B cell (primary cell): ENCODE measurements at regions of chr3 and their contacts with region 1.

Region 1: DNA sequence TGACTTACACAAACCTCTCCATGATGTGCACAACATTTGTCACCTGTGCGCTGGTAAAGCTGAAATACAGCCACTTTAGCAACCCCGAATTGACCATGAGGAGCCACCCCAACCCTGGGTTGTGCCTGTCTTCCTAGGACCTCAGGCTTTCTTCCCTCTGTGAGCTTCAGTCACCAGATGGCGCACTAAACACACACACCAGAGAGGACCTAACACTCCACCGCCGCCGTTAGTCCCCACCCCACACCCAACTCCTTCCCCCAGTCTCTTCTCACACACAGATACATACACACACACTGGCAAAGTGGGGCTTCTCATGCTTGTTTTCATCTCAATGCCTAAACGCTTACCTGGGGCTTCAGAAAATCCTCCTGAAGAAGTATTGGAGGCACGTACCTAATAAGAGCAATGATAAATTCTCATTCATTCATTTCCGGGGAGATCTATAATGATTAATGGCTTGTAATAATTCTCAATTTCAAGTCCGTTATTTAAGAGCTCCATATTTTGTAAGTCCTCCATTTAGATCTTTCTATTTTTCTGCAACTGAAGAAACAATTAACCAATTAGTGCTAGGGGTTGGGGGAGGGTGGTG is 2.1 kb upstream of the CCDC80 start:
- DNase-seq: peak; percentile 84
- ATAC-seq: peak; percentile 97
- H3K4me3 ChIP-seq: peak overlapping the region in 1 of 5 experiments; percentile 1
- H3K4me3 Mint-ChIP-seq: peak overlapping the region; percentile 66
- H3K27ac ChIP-seq: no peak overlapping the region
- H3K27ac Mint-ChIP-seq: no peak overlapping the region
- H3K4me1 ChIP-seq: peaks cover 0 to 9% of the 10 kb centered on the region in 2 donors
- H3K4me1 Mint-ChIP-seq: peaks cover 8% of the 10 kb centered on the region
- H3K27me3 ChIP-seq: peaks cover 0 to 12% (median 2%) of the 10 kb centered on the region in 4 experiments
- H3K27me3 Mint-ChIP-seq: peaks cover 4% of the 10 kb centered on the region
- CTCF ChIP-seq: peak; percentile 80

Region 2: DNA sequence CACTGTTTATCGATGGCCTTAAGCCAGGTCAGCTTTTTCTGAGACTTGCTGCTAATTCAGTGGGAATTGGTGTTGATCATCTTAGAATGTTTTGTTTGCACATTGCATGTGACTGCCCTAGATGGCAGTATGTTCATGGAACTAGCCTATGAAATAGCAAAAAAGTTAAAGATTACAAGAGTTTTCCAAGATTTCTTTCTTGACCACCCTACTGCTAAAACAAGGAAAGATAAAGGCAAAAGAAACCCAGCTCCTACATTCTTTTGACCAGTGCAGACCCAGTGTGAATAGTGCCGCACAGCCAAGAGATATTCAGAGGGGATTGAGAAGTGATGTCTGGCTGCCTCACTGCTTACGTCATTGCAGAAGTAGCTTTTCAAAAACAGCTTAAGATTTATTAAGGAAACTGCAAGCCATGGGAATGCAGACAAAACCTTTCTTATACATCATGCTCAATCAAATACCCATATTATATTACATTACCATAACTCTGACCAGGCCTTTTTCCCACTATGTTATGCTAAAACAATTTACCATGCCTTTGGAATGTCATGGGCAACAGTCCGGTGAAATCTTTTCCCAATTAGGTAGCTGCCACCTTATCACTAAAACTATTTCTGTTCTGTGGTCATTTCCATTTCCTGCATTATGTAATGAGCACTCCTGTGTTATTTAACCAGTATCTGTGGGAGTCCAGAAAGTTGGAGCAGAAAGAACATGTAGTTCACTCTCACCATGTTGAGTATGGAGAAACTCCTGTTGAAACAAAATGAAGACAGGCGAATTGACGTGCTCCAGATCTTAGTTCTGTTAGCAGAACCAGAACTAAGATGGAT is 778.0 kb before region 1 on chr3:
- CTCF ChIA-PET with region 1: no interaction called
- POLR2A ChIA-PET with region 1: no interaction called
- intact Hi-C with region 1: no loop called
- DNase-seq: no peak
- ATAC-seq: no peak
- H3K4me3 ChIP-seq: no peak overlapping the region
- H3K4me3 Mint-ChIP-seq: no peak overlapping the region
- H3K27ac ChIP-seq: no peak overlapping the region
- H3K27ac Mint-ChIP-seq: no peak overlapping the region
- H3K4me1 ChIP-seq: peaks cover 4 to 13% of the 10 kb centered on the region in 2 donors
- H3K4me1 Mint-ChIP-seq: peaks cover 5% of the 10 kb centered on the region
- H3K27me3 ChIP-seq: peaks cover 0 to 4% (median 1%) of the 10 kb centered on the region in 4 experiments
- H3K27me3 Mint-ChIP-seq: no peaks in the 10 kb centered on the region
- CTCF ChIP-seq: no peak

Region 3: GRCh38 chr3:112582244-112582874 is 60.6 kb before region 1 on chr3:
- CTCF ChIA-PET with region 1: interaction called, 23 read pairs
- POLR2A ChIA-PET with region 1: no interaction called
- intact Hi-C with region 1: no loop called
- DNase-seq: peak; percentile 43
- ATAC-seq: no peak
- H3K4me3 ChIP-seq: no peak overlapping the region
- H3K4me3 Mint-ChIP-seq: no peak overlapping the region
- H3K27ac ChIP-seq: no peak overlapping the region
- H3K27ac Mint-ChIP-seq: no peak overlapping the region
- H3K4me1 ChIP-seq: peaks cover 28 to 32% of the 10 kb centered on the region in 2 donors
- H3K4me1 Mint-ChIP-seq: peaks cover 31% of the 10 kb centered on the region
- H3K27me3 ChIP-seq: no peaks in the 10 kb centered on the region
- H3K27me3 Mint-ChIP-seq: no peaks in the 10 kb centered on the region
- CTCF ChIP-seq: peak; percentile 76

Region 4: DNA sequence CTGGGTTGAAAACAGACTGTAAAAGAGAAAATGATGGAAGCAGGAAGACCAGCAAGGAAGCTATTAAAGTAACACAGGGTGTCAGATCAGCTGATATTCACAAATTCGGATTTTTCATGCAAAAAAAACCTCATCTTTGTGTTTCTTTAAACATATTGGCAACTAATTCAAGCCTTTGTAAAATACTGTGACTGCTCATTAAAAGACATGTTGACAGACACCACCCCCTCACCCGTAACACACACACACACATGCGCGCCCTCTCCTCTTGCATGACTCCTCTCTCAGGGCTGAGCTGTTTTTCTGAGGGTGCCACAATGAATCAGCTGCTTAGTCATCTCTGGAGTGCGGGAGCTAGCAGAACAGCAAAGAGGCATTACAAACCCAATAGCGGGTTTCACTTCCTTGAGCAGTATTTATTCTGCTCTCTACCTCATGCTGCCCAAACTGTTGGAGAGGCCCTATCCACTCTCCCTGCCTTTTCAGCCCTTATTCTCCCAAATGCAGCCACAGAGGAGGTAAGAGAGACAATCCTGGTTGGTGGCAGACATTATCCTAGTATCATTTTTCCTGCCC is 33.7 kb after region 1 on chr3:
- CTCF ChIA-PET with region 1: interaction called, 3 read pairs
- POLR2A ChIA-PET with region 1: no interaction called
- intact Hi-C with region 1: loop called (anchors 2 kb)
- DNase-seq: peak; percentile 75
- ATAC-seq: peak; percentile 98
- H3K4me3 ChIP-seq: no peak overlapping the region
- H3K4me3 Mint-ChIP-seq: peak overlapping the region; percentile 17
- H3K27ac ChIP-seq: no peak overlapping the region
- H3K27ac Mint-ChIP-seq: peak overlapping the region; percentile 39
- H3K4me1 ChIP-seq: peaks cover 14 to 15% of the 10 kb centered on the region in 2 donors
- H3K4me1 Mint-ChIP-seq: peaks cover 27% of the 10 kb centered on the region
- H3K27me3 ChIP-seq: peaks cover 0 to 3% (median 0%) of the 10 kb centered on the region in 4 experiments
- H3K27me3 Mint-ChIP-seq: peaks cover 12% of the 10 kb centered on the region
- CTCF ChIP-seq: no peak

Region 5: DNA sequence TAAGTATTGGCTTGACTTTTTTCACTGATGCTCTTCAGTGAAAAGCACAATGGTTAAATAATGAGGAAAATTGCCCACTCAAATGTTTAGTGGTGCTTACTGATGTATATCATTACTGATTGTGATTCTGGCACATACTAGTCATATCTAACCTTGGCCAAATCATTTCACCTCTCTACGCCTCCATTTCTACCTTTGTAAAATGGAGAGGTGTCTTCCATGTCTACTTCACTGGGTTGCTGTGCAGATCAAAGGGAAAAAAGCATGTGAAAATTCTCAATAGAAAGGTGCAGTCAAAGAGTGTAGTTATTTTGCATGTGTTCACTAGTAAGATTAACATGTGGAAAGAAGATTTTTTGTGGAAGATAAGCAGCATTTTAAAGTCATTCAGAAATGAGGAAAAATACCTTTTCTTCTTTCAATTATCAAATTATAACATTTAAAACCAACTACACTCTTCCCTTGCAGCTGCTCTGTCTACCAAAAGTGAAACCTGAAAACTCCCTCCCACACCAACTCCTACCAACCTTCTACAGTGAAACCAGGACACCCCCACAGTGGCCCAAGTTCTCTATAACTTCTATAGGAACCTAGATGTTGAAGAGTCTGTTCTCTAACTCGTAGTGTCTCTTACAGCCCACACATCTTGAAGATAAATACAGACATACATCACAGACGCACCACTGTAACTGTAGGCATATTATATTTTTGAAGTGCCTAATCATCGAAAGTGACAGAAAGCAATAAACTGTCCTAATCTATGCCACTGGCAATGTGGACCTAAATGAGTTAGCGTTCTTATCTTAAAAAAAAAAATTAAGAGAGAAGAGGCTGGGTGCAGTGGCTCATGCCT is 330.5 kb after region 1 on chr3:
- CTCF ChIA-PET with region 1: interaction called, 96 read pairs
- POLR2A ChIA-PET with region 1: no interaction called
- intact Hi-C with region 1: no loop called
- DNase-seq: peak; percentile 60
- ATAC-seq: peak; percentile 85
- H3K4me3 ChIP-seq: peak overlapping the region in 4 of 5 experiments; percentile 32 to 52 (median 42)
- H3K4me3 Mint-ChIP-seq: peak overlapping the region; percentile 82
- H3K27ac ChIP-seq: peak overlapping the region in 1 of 2 donors; percentile 28
- H3K27ac Mint-ChIP-seq: peak overlapping the region; percentile 78
- H3K4me1 ChIP-seq: peaks cover 45 to 54% of the 10 kb centered on the region in 2 donors
- H3K4me1 Mint-ChIP-seq: peaks cover 72% of the 10 kb centered on the region
- H3K27me3 ChIP-seq: no peaks in the 10 kb centered on the region
- H3K27me3 Mint-ChIP-seq: no peaks in the 10 kb centered on the region
- CTCF ChIP-seq: no peak

Region 6: GRCh38 chr3:113035387-113035982 is 392.5 kb after region 1 on chr3:
- CTCF ChIA-PET with region 1: interaction called, 41 read pairs
- POLR2A ChIA-PET with region 1: no interaction called
- intact Hi-C with region 1: loop called (anchors 2 kb)
- DNase-seq: peak; percentile 66
- ATAC-seq: peak; percentile 76
- H3K4me3 ChIP-seq: no peak overlapping the region
- H3K4me3 Mint-ChIP-seq: no peak overlapping the region
- H3K27ac ChIP-seq: no peak overlapping the region
- H3K27ac Mint-ChIP-seq: no peak overlapping the region
- H3K4me1 ChIP-seq: no peaks in the 10 kb centered on the region
- H3K4me1 Mint-ChIP-seq: no peaks in the 10 kb centered on the region
- H3K27me3 ChIP-seq: no peaks in the 10 kb centered on the region
- H3K27me3 Mint-ChIP-seq: no peaks in the 10 kb centered on the region
- CTCF ChIP-seq: peak; percentile 88

Region 7: DNA sequence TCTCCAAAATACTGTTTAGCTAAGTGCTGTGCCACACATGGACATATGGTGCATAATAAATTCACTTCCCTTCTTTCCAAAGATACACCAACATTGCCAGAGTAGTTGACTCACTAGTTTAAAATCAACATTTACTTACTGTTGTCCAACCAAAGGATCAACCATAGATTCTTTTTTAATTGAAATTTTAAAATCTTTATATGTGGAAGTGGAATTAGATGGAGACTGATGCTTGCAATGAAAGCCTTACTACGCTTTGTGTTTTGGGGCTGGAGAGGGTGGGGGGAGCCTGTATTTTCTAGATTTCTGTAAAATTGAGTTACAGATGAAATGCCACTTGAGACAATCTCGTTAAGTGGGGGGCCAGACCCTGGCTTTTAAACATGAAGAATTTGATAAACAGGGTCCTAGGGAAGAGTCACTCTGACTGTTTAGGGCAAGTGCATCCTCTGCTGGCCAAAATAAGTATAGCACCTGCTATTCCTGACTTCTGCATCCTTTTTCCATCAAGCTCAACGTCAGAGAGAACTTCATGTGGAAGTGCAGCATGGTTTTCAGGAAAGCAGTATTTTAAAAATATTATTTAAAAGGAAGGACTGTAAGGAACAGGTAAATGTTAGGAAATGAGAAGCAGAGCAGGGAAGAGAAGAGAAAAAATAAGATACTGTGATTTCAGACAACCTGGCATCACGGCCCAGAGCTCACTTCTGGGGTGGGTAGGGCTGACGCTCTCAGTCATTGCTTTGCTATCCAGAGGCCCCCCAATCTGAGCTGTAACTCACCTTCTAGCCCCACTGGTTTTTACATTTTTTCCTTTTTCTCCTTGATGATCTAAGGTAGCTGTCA is 645.0 kb after region 1 on chr3:
- CTCF ChIA-PET with region 1: interaction called, 94 read pairs
- POLR2A ChIA-PET with region 1: no interaction called
- intact Hi-C with region 1: loop called (anchors 1 kb)
- DNase-seq: peak; percentile 69
- ATAC-seq: peak; percentile 69
- H3K4me3 ChIP-seq: no peak overlapping the region
- H3K4me3 Mint-ChIP-seq: no peak overlapping the region
- H3K27ac ChIP-seq: no peak overlapping the region
- H3K27ac Mint-ChIP-seq: no peak overlapping the region
- H3K4me1 ChIP-seq: no peaks in the 10 kb centered on the region
- H3K4me1 Mint-ChIP-seq: no peaks in the 10 kb centered on the region
- H3K27me3 ChIP-seq: no peaks in the 10 kb centered on the region
- H3K27me3 Mint-ChIP-seq: no peaks in the 10 kb centered on the region
- CTCF ChIP-seq: peak; percentile 100